PC-9 (cell line): ENCODE measurements at regions of chr1 and their contacts with region 1.

Region 1: DNA sequence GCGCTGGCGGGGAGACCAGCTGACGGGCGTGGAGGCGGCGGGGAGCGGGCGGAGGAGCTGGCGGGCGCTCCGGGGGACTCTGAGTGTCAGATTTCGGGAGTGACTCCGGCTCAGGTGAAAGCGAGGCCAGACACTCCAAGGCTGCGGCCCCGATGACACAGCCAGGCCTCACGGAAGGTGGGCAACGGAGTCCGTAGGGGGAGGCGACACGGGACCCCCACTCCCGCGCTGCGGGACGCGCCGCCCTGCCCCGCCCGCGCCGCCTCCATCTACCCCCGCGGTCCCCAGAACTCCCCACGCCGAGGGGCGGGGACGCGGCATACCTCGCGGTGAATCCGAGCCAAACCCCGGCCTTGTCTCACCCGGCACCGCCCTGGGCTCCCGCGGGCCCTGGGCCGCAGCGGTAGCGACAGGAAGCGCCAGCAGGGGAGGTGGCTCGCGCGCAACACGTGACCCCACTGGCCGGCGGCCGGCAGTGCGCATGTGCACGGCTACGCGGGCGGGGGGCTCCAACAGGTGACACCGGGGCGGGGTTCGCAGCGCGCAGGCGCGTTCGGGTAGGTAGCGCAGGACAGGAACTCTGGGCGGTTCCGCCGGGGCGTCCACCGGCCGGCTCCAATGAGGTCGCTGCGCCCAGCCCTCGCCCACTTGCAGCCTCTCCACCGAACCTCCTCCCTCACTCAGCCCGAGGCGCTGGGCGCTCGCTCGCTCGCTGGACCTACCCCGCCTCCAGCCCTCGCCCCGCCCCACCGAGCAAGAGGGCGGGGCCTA is at the start of gene CC2D1B:
- DNase-seq: peak; percentile 94 to 100
- H3K4me3 ChIP-seq: peak within 1 kb of the TSS; percentile 92
- H3K27ac ChIP-seq: peak within 1 kb of the TSS; percentile 86
- H3K4me1 ChIP-seq: peaks cover 15% of the 10 kb centered on the region
- H3K27me3 ChIP-seq: no peaks in the 10 kb centered on the region
- CTCF ChIP-seq: no peak
- total RNA-seq, gene CC2D1B: 33.4 and 38.8 TPM in 2 replicates

Region 2: DNA sequence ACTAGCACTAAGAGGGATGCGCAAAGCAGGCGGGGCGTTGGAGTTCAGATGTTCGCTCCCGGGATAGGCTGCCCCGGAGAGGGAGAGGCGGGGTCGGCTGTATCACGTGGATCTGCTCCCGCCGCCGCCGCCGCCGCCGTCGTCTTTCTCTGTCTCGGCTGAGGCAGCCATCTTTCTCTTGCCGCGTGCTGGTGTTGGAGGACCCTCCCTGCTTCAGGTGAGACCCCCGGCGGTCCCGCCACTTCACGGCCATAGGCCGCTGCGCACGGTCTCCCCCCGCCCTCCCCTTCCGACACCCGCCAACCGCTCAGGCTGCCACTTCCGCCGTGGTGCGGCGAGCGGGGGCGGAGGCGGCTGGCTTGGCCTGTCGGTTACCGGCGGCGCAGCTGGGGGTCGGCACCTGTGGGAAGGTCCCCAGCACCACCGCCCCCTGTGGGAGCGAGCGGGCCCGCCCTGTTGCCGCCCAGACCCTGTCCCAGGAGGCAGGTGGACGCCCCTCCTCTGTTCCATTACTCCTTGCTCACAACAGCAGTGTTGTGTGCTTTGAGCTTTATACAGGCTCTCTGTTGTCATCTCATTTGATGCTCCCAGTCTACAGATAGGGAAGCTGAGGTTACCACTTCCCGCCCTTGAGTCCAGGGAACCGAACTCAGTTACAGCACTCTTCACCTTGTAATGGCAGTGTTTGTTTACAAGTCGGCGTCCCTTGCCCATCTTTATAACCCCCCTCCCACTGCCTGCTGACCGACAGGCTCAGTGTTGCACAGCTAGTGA is 309.6 kb before region 1 on chr1 and contains the start of gene BTF3L4:
- CTCF ChIA-PET with region 1: no interaction called
- POLR2A ChIA-PET with region 1: interaction called, 5 read pairs
- intact Hi-C with region 1: loop called (anchors 5 kb)
- DNase-seq: peak; percentile 89 to 94
- H3K4me3 ChIP-seq: peak within 1 kb of the TSS; percentile 95
- H3K27ac ChIP-seq: peak within 1 kb of the TSS; percentile 93
- H3K4me1 ChIP-seq: peaks cover 39% of the 10 kb centered on the region
- H3K27me3 ChIP-seq: no peaks in the 10 kb centered on the region
- CTCF ChIP-seq: no peak
- total RNA-seq, gene BTF3L4: 47.0 and 48.6 TPM in 2 replicates

Region 3: GRCh38 chr1:52072291-52072690 is 293.6 kb before region 1 on chr1:
- CTCF ChIA-PET with region 1: interaction called, 12 read pairs
- POLR2A ChIA-PET with region 1: no interaction called
- intact Hi-C with region 1: no loop called
- DNase-seq: no peak
- H3K4me3 ChIP-seq: no peak overlapping the region
- H3K27ac ChIP-seq: no peak overlapping the region
- H3K4me1 ChIP-seq: no peaks in the 10 kb centered on the region
- H3K27me3 ChIP-seq: no peaks in the 10 kb centered on the region
- CTCF ChIP-seq: no peak

Region 4: DNA sequence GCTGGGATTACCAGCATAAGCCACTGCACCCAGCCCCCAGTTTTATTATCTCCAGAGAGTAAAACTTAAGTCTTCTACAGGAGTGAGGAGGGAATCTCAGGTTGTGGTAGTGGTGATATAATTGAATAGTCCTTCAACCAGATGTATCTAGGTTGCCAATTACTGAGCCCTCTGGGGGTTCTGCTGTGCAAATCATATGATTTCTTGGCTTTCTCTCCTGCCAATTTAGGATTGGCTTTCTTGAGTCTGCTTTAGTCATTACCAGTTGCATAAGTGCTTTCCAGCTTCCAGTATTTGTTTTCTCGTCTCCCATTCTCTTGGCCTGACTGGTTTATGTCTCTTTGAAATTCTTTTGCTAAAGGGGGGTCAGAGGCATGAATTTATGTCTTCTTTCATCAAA is 841.8 kb after region 1 on chr1:
- CTCF ChIA-PET with region 1: no interaction called
- POLR2A ChIA-PET with region 1: interaction called, 11 read pairs
- intact Hi-C with region 1: no loop called
- DNase-seq: no peak
- H3K4me3 ChIP-seq: no peak overlapping the region
- H3K27ac ChIP-seq: no peak overlapping the region
- H3K4me1 ChIP-seq: no peaks in the 10 kb centered on the region
- H3K27me3 ChIP-seq: no peaks in the 10 kb centered on the region
- CTCF ChIP-seq: no peak

Region 5: GRCh38 chr1:53592521-53592982 is 1226.6 kb after region 1 on chr1:
- CTCF ChIA-PET with region 1: no interaction called
- POLR2A ChIA-PET with region 1: no interaction called
- intact Hi-C with region 1: no loop called
- DNase-seq: peak; percentile 71 to 74
- H3K4me3 ChIP-seq: no peak overlapping the region
- H3K27ac ChIP-seq: no peak overlapping the region
- H3K4me1 ChIP-seq: no peaks in the 10 kb centered on the region; the same call in 1 of the 2 replicates
- H3K27me3 ChIP-seq: peaks cover 2% of the 10 kb centered on the region
- CTCF ChIP-seq: peak; percentile 54; the same call in 1 of the 2 replicates